Activated T-helper 2 cell treated with anti-CD3 and anti-CD28 coated beads, Interferon-gamma antibody, Interleukin-2, Interleukin-4, amounts not matched to agents 10 μg/mL and 5 μg/mL and 100 μg/mL, durations not matched to agents 14 hours and 24 hours and 36 hours (primary cell): ENCODE measurements at regions of chr12 and their contacts with region 1.

Region 1: GRCh38 chr12:89389755-89390661 is 37.7 kb upstream of the DUSP6 start:
- DNase-seq: no peak
- H3K4me3 Mint-ChIP-seq: peak overlapping the region; percentile 2
- H3K27ac Mint-ChIP-seq: peak overlapping the region; percentile 87
- H3K4me1 Mint-ChIP-seq: peaks cover 33% of the 10 kb centered on the region
- H3K27me3 Mint-ChIP-seq: no peaks in the 10 kb centered on the region

Region 2: GRCh38 chr12:89179983-89180382 is 210.0 kb before region 1 on chr12:
- intact Hi-C with region 1: loop called (anchors 1 kb)
- DNase-seq: no peak
- H3K4me3 Mint-ChIP-seq: peak overlapping the region; percentile 50
- H3K27ac Mint-ChIP-seq: peak overlapping the region; percentile 86
- H3K4me1 Mint-ChIP-seq: peaks cover 71% of the 10 kb centered on the region
- H3K27me3 Mint-ChIP-seq: no peaks in the 10 kb centered on the region

Region 3: GRCh38 chr12:89261982-89262381 is 128.0 kb before region 1 on chr12:
- intact Hi-C with region 1: loop called (anchors 5 kb)
- DNase-seq: no peak
- H3K4me3 Mint-ChIP-seq: no peak overlapping the region
- H3K27ac Mint-ChIP-seq: peak overlapping the region; percentile 28
- H3K4me1 Mint-ChIP-seq: peaks cover 52% of the 10 kb centered on the region
- H3K27me3 Mint-ChIP-seq: no peaks in the 10 kb centered on the region

Region 4: DNA sequence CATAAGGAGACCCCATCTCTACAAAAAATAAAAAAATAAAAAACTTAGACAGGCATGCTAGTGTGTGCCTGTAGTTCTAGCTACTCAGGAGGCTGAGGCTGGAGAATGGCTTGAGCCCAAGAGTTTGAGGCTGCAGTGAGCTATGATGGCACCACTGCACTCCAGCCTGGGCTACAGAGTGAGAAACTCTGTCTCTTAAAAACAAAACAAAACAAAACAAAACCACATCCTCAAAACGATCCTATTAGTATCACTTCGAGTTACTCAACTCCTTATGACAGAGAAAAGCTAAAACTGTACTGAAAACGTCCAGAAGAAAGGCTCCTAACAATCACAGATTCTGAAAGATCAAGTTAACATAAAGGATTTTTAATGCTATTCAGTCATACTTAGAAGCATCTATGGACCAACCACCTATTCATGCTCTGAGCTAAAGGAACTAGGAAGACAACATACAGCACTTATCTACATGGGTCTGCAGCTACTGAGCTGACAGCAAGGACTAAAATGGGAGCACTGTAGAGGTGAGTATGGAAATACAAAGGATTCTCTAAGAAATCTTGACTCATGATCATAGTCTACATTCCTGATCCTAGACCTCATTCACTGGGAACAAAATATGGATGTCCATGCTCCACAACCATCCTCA is 37.6 kb after region 1 on chr12:
- intact Hi-C with region 1: loop called (anchors 5 kb)
- DNase-seq: peak; percentile 18
- H3K4me3 Mint-ChIP-seq: peak overlapping the region; percentile 46
- H3K27ac Mint-ChIP-seq: peak overlapping the region; percentile 73
- H3K4me1 Mint-ChIP-seq: peaks cover 38% of the 10 kb centered on the region
- H3K27me3 Mint-ChIP-seq: no peaks in the 10 kb centered on the region